Mammary epithelial cell (primary cell): ENCODE measurements at regions of chr11 and their contacts with region 1.

Region 1: DNA sequence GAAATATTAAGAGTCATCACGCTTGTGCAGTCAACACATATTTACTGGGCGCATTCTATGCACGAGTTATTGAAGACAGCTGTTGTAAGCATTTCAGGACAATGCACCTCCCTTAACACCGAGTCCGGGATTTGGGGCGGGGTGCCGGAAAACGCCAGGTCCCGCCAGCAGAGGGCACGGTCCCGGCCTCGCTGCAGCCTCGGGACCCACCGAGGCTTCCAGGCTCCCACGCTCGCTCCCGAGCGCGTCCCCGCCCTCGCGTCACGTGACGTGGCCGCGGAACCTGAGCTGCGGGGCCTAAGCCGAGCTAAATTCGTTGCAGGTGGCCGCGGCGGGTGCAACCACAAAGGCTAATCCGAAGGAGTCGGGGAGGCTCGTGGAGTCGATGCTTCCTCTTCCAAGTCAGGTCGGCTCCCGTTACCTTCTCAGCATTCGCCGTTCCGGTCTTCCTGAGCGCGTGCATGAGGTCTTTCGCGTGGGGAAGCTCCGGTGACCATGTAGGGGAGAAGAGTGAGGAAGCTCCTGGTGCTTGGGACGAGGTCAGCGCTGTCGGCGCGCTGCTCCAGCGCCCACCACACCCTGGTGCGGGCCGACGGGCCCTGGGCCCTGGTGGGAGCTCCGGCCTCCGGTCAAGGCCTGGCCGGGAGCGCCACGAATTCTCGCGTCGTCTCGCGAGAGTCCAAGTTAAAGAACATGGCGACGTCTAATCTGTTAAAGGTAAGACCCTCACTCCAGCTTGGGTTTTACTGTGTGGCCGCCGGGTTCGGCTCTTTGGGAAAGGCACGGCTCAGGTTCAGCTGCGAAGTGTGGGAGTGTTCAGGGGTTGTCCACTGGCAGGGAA is at the start of gene CUL5:
- DNase-seq: peak; percentile 86
- H3K4me3 ChIP-seq: peak within 1 kb of the TSS; percentile 62 to 97 (median 69)
- H3K27ac ChIP-seq: peak within 1 kb of the TSS; percentile 88
- H3K4me1 ChIP-seq: peaks cover 14% of the 10 kb centered on the region
- H3K27me3 ChIP-seq: no peaks in the 10 kb centered on the region
- CTCF ChIP-seq: peak; percentile 75 to 94
- total RNA-seq, gene CUL5: 29.8 to 36.7 TPM

Region 2: DNA sequence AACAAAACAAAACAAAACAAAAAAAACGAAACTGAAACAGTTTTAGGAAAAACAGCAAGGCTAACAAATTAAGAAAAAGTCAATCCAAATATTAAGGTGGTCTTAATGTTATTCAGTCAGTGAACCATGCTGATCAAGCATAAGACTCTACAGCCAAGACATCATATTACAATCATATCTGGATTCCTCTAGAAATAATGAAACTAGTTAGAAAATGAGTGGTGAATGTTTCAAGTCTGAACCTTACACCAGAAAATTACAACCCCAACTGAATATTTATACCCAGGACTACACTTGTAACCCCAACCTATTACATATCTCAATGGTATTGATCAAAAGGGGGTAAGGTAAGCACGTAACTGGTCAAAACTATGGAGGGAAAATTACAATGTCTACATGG is 161.3 kb after region 1 on chr11:
- CTCF ChIA-PET with region 1: no interaction called
- dilution Hi-C with region 1: no loop called
- in situ Hi-C with region 1: no loop called
- intact Hi-C with region 1: no loop called
- DNase-seq: no peak
- H3K4me3 ChIP-seq: no peak overlapping the region
- H3K27ac ChIP-seq: no peak overlapping the region
- H3K4me1 ChIP-seq: no peaks in the 10 kb centered on the region
- H3K27me3 ChIP-seq: no peaks in the 10 kb centered on the region
- CTCF ChIP-seq: no peak

Region 3: DNA sequence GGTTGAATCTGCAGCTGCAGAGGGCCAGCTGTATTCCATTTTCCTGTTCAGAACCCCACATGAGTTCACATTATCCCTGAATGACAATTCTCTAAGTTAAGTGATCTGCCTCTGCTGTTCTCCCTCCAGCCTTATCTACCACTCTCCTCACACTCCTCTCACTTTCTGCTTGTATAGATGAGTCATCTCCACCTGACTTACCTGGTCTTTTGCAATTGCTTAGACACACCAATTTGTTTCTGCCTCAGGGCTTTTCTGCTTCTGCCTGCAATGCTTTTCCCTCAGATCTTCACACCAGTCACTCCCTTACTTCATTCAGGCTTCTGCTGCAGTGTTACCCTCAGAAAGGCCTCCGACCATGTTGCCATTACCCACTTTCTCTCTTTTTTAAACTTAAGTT is 332.1 kb after region 1 on chr11:
- CTCF ChIA-PET with region 1: no interaction called
- dilution Hi-C with region 1: no loop called
- in situ Hi-C with region 1: no loop called
- intact Hi-C with region 1: no loop called
- DNase-seq: peak; percentile 96
- H3K4me3 ChIP-seq: no peak overlapping the region
- H3K27ac ChIP-seq: peak overlapping the region; percentile 18
- H3K4me1 ChIP-seq: peaks cover 10% of the 10 kb centered on the region
- H3K27me3 ChIP-seq: no peaks in the 10 kb centered on the region
- CTCF ChIP-seq: no peak

Region 4: GRCh38 chr11:108501396-108501795 is 492.5 kb after region 1 on chr11:
- CTCF ChIA-PET with region 1: no interaction called
- dilution Hi-C with region 1: no loop called
- in situ Hi-C with region 1: no loop called
- intact Hi-C with region 1: no loop called
- DNase-seq: no peak
- H3K4me3 ChIP-seq: no peak overlapping the region
- H3K27ac ChIP-seq: no peak overlapping the region
- H3K4me1 ChIP-seq: peaks cover 16% of the 10 kb centered on the region
- H3K27me3 ChIP-seq: no peaks in the 10 kb centered on the region
- CTCF ChIP-seq: no peak

Region 5: DNA sequence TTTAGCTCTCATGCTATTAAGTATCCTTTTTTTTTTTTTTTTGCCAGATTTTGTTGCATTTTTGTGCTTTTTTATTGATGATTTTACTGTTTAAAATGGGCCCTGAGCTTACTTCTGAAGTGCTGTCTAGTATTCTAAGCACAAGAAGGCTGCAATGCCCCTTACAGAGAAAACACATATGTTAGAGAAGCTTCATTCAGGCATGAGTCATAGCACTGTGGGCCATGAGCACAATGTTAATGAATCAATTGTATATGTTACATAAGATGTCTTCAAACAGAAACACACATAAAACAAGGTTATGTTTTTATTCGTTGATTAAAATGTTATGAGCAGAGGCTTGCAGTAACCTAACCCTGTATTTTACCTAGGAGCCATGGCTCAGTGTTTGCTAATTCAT is 1295.3 kb after region 1 on chr11:
- CTCF ChIA-PET with region 1: interaction called, 19 read pairs
- dilution Hi-C with region 1: no loop called
- in situ Hi-C with region 1: no loop called
- intact Hi-C with region 1: no loop called
- DNase-seq: peak; percentile 39
- H3K4me3 ChIP-seq: no peak overlapping the region
- H3K27ac ChIP-seq: no peak overlapping the region
- H3K4me1 ChIP-seq: peaks cover 11% of the 10 kb centered on the region
- H3K27me3 ChIP-seq: no peaks in the 10 kb centered on the region
- CTCF ChIP-seq: no peak